HepG2 (cell line): ENCODE measurements at regions of chr15 and their contacts with region 1.

Region 1: DNA sequence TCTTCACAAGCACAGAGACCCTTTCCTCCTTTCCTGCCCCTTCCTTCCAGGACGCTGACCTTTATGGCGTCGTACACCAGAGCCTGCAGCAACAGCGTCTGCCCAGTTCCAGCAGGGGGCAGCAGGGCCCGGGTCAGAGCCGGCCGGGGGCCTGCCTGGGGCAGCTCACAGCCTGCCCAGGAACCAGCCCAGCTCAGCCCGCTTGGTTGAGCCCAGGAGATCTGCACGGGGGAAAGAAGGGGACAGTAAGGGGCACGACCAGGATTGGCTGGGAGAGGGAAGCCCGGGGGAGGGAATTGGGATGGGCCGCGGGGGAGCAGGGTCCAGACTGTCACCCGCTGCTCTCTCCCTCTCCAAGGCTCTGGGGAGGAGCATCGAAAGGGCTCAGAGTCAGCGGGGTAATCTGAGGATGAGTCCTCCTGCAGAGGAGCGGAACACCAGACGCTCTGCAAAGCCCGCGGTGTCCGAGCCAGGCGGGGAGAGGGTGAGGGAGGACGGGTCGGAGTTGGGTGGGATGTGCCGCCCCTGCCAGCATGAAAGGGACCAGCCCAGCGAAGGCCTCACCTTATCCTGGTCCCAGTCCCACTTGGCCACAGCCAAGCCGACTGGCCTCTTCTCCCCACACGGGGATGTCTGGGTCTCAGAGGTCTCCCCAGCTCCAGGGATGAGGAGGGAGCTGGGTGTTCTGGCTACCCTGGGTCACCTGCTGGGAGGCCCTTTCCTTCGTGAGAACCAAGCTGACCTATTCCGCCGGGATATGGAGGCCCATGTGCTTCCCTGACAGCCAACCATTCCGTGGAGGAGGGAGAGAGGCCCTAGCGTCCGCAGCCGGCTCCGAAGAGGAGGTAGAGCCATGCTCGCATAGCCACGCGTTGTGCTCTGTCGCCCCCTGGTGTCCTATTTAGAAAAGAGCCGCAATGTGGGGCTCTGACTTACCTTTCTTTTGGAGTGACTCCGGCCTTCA is 7.4 kb upstream of the IGDCC3 start:
- DNase-seq: peak; percentile 87
- ATAC-seq: peak; percentile 91
- H3K4me3 ChIP-seq: peak overlapping the region; percentile 44 to 80 (median 58)
- H3K27ac ChIP-seq: peak overlapping the region; percentile 71
- H3K4me1 ChIP-seq: peaks cover 42% of the 10 kb centered on the region
- H3K27me3 ChIP-seq: peaks cover 0 to 11% of the 10 kb centered on the region in 2 experiments; a peak in 2 of 5 replicates
- CTCF ChIP-seq: peak; percentile 98
- EP300 ChIP-seq: 0 out of 4 replicates have a peak, but pooled peaks have one; percentile 11 to 25
- POLR2A ChIP-seq: 0 out of 4 replicates have a peak, but pooled peaks of 1 of the 2 experiments have one; percentile 42
- RAD21 ChIP-seq: peak; percentile 96

Region 2: DNA sequence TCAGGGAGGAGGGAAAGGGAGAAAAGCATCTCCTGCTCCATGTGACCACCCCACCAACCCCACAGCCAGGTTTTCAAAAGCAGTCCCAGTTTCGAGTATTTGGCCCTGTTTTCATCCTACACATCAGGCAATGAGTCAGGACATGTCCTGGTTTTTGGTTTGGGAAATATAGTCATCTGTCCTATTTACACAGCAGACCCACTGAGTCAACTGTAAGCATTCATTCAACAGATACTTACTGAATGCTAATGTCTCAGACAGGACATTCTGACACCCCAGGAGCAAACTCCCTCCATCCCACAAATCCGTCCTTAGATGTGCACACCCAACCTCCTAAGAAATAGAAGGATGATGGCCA is 40.3 kb before region 1 on chr15:
- CTCF ChIA-PET with region 1: no interaction called
- POLR2A ChIA-PET with region 1: interaction called, 3 read pairs
- in situ Hi-C with region 1: no loop called
- intact Hi-C with region 1: loop called (anchors 5 kb)
- DNase-seq: no peak
- ATAC-seq: no peak
- H3K4me3 ChIP-seq: no peak overlapping the region
- H3K27ac ChIP-seq: no peak overlapping the region
- H3K4me1 ChIP-seq: peaks cover 51% of the 10 kb centered on the region
- H3K27me3 ChIP-seq: no peaks in the 10 kb centered on the region
- CTCF ChIP-seq: no peak
- EP300 ChIP-seq: no peak
- POLR2A ChIP-seq: no peak
- RAD21 ChIP-seq: no peak

Region 3: GRCh38 chr15:65466901-65467300 is 81.7 kb after region 1 on chr15:
- CTCF ChIA-PET with region 1: no interaction called
- POLR2A ChIA-PET with region 1: no interaction called
- in situ Hi-C with region 1: no loop called
- intact Hi-C with region 1: no loop called
- DNase-seq: no peak
- ATAC-seq: no peak
- H3K4me3 ChIP-seq: no peak overlapping the region
- H3K27ac ChIP-seq: no peak overlapping the region
- H3K4me1 ChIP-seq: no peaks in the 10 kb centered on the region
- H3K27me3 ChIP-seq: no peaks in the 10 kb centered on the region
- CTCF ChIP-seq: no peak
- EP300 ChIP-seq: no peak
- POLR2A ChIP-seq: no peak
- RAD21 ChIP-seq: no peak

Region 4: GRCh38 chr15:65516997-65517865 is 132.1 kb after region 1 on chr15 and contains the start of gene DPP8:
- CTCF ChIA-PET with region 1: no interaction called
- POLR2A ChIA-PET with region 1: no interaction called
- in situ Hi-C with region 1: no loop called
- intact Hi-C with region 1: no loop called
- DNase-seq: peak; percentile 88
- ATAC-seq: peak; percentile 96
- H3K4me3 ChIP-seq: peak within 1 kb of the TSS; percentile 87 to 100 (median 97)
- H3K27ac ChIP-seq: peak within 1 kb of the TSS; percentile 99
- H3K4me1 ChIP-seq: peaks cover 45% of the 10 kb centered on the region
- H3K27me3 ChIP-seq: no peaks in the 10 kb centered on the region; a peak in 1 of 5 replicates
- CTCF ChIP-seq: peak; percentile 98
- EP300 ChIP-seq: no peak
- POLR2A ChIP-seq: peak; percentile 63 to 92
- RAD21 ChIP-seq: peak; percentile 60; the same call in 1 of the 2 replicates
- total RNA-seq, gene DPP8: 26.3 and 34.8 TPM in 2 replicates